Endothelial cell of umbilical vein (primary cell): ENCODE measurements at regions of chr6 and their contacts with region 1.

Region 1: GRCh38 chr6:7725849-7726415 is at the start of gene BMP6:
- DNase-seq: peak; percentile 95
- H3K4me3 ChIP-seq: peak within 1 kb of the TSS; percentile 70 to 94 (median 73)
- H3K27ac ChIP-seq: peak within 1 kb of the TSS; percentile 59
- H3K4me1 ChIP-seq: peaks cover 30% of the 10 kb centered on the region
- H3K27me3 ChIP-seq: no peaks in the 10 kb centered on the region
- CTCF ChIP-seq: peak in 1 of 2 donors; percentile 6
- POLR2A ChIP-seq: peak; percentile 99
- total RNA-seq, gene BMP6: 221 and 234 TPM in 2 replicates

Region 2: DNA sequence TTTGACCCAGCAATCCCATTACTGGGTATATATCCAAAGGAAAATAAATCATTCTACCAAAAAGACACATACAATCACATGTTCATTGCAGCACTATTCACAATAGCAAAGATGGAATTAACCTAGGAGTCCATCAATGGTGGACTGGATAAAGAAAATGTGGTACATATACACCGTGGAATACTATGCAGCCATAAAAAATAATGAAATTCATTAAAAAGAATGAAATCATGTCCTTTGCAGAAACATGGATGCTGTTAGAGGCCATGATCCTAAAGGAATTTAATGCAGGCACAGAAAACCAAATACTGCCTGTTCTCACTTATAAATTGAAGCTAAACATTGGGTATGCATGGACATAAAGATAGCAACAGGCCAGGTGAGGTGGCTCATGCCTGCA is 61.9 kb before region 1 on chr6:
- CTCF ChIA-PET with region 1: no interaction called
- POLR2A ChIA-PET with region 1: no interaction called
- dilution Hi-C with region 1: no loop called
- intact Hi-C with region 1: no loop called
- DNase-seq: no peak
- H3K4me3 ChIP-seq: no peak overlapping the region
- H3K27ac ChIP-seq: no peak overlapping the region
- H3K4me1 ChIP-seq: no peaks in the 10 kb centered on the region
- H3K27me3 ChIP-seq: peaks cover 10 to 11% of the 10 kb centered on the region in 2 experiments
- CTCF ChIP-seq: no peak
- POLR2A ChIP-seq: no peak

Region 3: DNA sequence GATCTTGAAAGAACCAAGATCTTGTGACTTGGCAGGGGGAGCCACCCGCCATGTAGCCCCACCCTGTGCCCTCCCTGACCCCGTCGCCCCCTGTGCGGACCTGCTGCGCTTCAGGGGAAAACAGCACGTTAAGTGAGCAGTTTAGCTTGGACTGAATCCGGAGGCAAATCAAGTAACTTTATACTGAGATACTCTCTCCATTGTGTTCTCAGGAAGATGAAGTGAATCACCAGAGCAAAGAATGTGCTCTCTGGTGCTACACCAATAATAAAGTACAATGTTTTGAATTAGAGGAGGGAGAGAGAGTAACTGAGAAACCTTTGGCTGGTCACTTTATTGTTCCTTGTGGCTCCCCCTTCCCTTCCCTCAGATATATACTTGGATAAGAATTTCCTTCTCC is 101.2 kb after region 1 on chr6:
- CTCF ChIA-PET with region 1: interaction called, 4 read pairs
- POLR2A ChIA-PET with region 1: no interaction called
- dilution Hi-C with region 1: no loop called
- intact Hi-C with region 1: loop called (anchors 2 kb)
- DNase-seq: peak; percentile 93
- H3K4me3 ChIP-seq: no peak overlapping the region
- H3K27ac ChIP-seq: peak overlapping the region; percentile 74
- H3K4me1 ChIP-seq: peaks cover 53% of the 10 kb centered on the region
- H3K27me3 ChIP-seq: no peaks in the 10 kb centered on the region
- CTCF ChIP-seq: no peak
- POLR2A ChIP-seq: no peak

Region 4: GRCh38 chr6:7887278-7887991 is 161.5 kb after region 1 on chr6:
- CTCF ChIA-PET with region 1: interaction called, 31 read pairs
- POLR2A ChIA-PET with region 1: no interaction called
- dilution Hi-C with region 1: no loop called
- intact Hi-C with region 1: loop called (anchors 2 kb)
- DNase-seq: peak; percentile 64
- H3K4me3 ChIP-seq: no peak overlapping the region
- H3K27ac ChIP-seq: peak overlapping the region; percentile 36
- H3K4me1 ChIP-seq: peaks cover 11% of the 10 kb centered on the region
- H3K27me3 ChIP-seq: no peaks in the 10 kb centered on the region
- CTCF ChIP-seq: no peak
- POLR2A ChIP-seq: peak; percentile 83

Region 5: GRCh38 chr6:7974938-7975763 is 249.2 kb after region 1 on chr6:
- CTCF ChIA-PET with region 1: no interaction called
- POLR2A ChIA-PET with region 1: no interaction called
- dilution Hi-C with region 1: no loop called
- intact Hi-C with region 1: loop called (anchors 1 kb)
- DNase-seq: peak; percentile 100
- H3K4me3 ChIP-seq: no peak overlapping the region
- H3K27ac ChIP-seq: peak overlapping the region; percentile 85
- H3K4me1 ChIP-seq: peaks cover 36% of the 10 kb centered on the region
- H3K27me3 ChIP-seq: no peaks in the 10 kb centered on the region
- CTCF ChIP-seq: no peak
- POLR2A ChIP-seq: peak; percentile 67

Region 6: DNA sequence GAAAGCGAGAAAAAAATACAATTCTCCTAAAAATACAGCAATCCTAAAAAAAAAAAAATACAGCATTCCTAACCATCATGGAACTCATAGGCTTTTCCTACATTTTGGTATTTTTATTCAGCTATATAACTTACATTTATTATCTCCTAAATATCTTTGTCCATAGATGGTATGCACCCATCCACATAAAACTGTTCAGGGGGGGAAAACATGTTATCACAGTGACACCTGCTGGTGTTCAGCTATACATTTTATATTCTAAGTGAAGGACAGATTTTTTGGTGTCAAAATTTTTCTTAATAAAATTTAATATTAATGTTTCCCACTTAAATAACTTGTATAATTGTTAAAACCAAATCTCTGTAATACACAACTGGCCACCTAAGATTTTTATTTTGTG is 280.3 kb after region 1 on chr6:
- CTCF ChIA-PET with region 1: interaction called, 140 read pairs
- POLR2A ChIA-PET with region 1: interaction called, 9 read pairs
- dilution Hi-C with region 1: no loop called
- intact Hi-C with region 1: loop called (anchors 1 kb)
- DNase-seq: peak; percentile 80
- H3K4me3 ChIP-seq: no peak overlapping the region
- H3K27ac ChIP-seq: no peak overlapping the region
- H3K4me1 ChIP-seq: peaks cover 51% of the 10 kb centered on the region
- H3K27me3 ChIP-seq: no peaks in the 10 kb centered on the region
- CTCF ChIP-seq: peak; percentile 23 to 26
- POLR2A ChIP-seq: no peak

Region 7: DNA sequence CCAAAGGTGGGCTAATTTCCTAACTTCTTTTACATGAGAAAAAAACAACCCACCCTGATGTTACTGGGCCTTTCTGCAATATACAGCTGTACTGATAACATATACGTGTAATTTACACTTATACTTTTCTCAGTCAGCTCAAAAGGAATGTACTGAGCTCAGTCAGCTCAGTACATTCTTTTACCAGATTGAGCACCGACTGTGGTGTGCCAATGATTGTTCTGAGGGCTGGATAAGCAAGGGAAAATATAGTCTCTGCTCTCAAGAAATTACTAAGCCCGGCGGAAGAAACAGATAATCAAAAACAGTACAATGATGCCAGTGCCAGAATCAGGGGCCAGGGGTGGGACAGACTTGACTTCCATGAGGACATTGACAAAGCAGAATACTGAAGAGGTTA is 348.3 kb after region 1 on chr6:
- CTCF ChIA-PET with region 1: no interaction called
- POLR2A ChIA-PET with region 1: no interaction called
- dilution Hi-C with region 1: no loop called
- intact Hi-C with region 1: no loop called
- DNase-seq: no peak
- H3K4me3 ChIP-seq: no peak overlapping the region
- H3K27ac ChIP-seq: no peak overlapping the region
- H3K4me1 ChIP-seq: no peaks in the 10 kb centered on the region
- H3K27me3 ChIP-seq: no peaks in the 10 kb centered on the region
- CTCF ChIP-seq: no peak
- POLR2A ChIP-seq: no peak